Heart right ventricle (tissue), 16 donors: ENCODE measurements at regions of chr5 and their contacts with region 1.

Region 1: DNA sequence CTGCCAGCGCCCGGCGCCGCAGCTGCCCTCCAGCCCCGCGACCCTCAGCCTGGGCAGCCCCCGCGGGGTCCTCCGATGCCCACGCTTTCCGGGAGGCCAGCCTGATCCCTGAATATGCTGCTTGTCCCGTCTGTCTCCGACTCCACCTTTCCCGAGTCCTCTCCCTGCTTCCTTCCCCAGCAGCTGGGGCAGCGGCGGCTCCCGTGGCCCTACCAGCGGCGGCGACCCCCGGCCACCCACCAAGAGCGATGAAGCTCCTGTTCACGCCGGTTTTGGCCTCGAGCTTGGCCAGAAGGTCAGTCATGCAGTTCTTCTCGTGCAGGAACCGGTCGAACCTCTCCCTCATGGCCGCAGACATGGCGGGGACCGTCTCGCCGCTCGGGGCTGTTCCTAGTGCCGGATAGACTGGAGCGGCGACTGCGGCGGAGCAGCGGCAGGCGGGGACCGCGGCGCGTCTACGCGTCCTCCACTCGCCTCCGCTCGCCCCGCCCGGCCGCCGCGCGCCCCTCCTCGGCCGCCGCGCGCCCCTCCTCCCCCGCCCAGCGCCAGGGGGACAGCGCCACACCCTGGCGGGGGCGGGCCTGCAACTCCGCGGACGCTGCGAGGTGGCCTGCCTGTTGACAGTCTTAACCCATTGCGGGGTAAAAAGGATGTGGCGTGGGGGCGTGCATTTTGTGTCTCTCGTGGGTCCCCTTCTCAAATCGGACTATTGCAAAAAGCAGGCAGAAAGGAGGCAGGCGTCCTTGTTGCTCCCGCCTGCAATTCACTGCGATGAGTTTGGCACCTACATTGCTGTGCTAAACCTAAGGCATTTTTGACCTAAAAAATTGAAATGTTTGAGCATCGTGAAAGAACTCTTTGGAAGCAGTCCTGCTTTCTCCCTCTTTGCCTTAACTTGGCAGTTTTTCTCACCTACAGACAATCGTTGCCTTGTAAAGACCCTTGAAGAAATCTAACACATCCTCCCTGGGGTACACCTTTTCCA is at the start of gene REEP5:
- DNase-seq: peak; percentile 83 to 90
- ATAC-seq: peak; percentile 92 to 98 (median 96)
- H3K4me3 ChIP-seq: peak within 1 kb of the TSS; percentile 71 to 100 (median 94)
- H3K27ac ChIP-seq: peak within 1 kb of the TSS; percentile 87 to 99 (median 98)
- H3K4me1 ChIP-seq: peaks cover 5 to 61% (median 47%) of the 10 kb centered on the region in 9 donors
- H3K27me3 ChIP-seq: no peaks in the 10 kb centered on the region
- CTCF ChIP-seq: peak; percentile 65 to 92 (median 88)
- total RNA-seq, gene REEP5: 118 to 169 (median 134) TPM

Region 2: DNA sequence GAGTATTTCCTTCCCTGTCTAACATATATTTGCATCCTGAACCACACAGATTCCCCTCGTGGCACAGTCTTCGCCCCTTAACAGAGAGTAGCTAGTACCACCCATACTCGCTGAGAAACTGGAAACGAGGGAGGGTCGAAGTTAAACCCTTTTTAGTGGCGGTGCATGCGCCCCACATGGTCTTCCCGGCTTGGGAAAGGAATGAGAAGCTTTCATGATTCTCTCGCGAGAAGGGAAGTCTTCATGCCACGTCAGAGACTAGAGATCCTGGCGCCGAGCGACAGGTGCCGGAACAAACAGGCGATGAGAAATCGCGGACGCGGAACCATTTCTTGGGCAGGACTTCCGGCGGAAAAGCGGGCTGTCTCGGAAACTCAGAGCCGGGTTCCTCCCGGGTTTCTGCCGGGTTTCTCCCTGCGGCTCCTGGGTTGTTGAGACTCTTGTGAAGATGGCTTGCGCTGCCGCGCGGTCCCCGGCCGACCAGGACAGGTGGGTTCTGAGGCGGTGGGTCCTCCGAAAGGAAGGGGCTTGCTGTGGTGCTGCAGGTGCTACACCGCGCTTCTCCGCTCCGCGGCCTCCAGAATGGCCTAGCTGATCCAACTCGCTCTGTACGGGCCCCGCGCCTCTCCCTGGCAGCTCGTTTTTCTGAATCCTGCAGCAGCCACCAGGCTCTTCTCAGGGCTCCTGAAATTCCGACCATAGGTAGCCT is 61.0 kb before region 1 on chr5 and contains the start of gene SRP19:
- intact Hi-C with region 1: loop called in 6 of 10 experiments (anchors 2 to 5 kb)
- DNase-seq: peak; percentile 92 to 96
- ATAC-seq: peak; percentile 96 to 98 (median 98)
- H3K4me3 ChIP-seq: peak within 1 kb of the TSS; percentile 79 to 98 (median 92)
- H3K27ac ChIP-seq: peak within 1 kb of the TSS; percentile 24 to 92 (median 83)
- H3K4me1 ChIP-seq: peaks cover 12 to 35% (median 30%) of the 10 kb centered on the region in 9 donors
- H3K27me3 ChIP-seq: no peaks in the 10 kb centered on the region
- CTCF ChIP-seq: no peak
- total RNA-seq, gene SRP19: 19.4 to 33.9 (median 26.6) TPM

Region 3: DNA sequence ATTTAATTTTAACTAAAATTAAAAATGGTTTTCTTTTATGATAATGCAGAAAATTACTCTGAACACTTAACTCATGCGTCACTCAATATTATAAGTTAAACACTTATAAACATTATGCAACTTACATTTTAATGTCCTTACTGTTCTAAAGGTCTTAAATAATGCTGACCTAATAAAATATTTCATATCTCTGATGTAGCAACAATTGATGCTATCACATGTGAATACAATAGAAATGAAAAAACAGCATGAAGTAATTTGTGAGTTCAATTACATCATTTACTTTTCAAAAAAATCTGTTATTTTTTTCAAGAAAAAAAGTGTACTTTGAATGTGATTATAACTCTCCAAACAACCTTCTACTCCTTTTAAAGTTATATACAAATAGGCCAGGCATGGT is 26.3 kb after region 1 on chr5:
- intact Hi-C with region 1: loop called in 1 of 10 experiments (anchors 1 kb)
- DNase-seq: no peak
- ATAC-seq: no peak
- H3K4me3 ChIP-seq: no peak overlapping the region
- H3K27ac ChIP-seq: no peak overlapping the region
- H3K4me1 ChIP-seq: no peaks in the 10 kb centered on the region
- H3K27me3 ChIP-seq: no peaks in the 10 kb centered on the region
- CTCF ChIP-seq: no peak

Region 4: DNA sequence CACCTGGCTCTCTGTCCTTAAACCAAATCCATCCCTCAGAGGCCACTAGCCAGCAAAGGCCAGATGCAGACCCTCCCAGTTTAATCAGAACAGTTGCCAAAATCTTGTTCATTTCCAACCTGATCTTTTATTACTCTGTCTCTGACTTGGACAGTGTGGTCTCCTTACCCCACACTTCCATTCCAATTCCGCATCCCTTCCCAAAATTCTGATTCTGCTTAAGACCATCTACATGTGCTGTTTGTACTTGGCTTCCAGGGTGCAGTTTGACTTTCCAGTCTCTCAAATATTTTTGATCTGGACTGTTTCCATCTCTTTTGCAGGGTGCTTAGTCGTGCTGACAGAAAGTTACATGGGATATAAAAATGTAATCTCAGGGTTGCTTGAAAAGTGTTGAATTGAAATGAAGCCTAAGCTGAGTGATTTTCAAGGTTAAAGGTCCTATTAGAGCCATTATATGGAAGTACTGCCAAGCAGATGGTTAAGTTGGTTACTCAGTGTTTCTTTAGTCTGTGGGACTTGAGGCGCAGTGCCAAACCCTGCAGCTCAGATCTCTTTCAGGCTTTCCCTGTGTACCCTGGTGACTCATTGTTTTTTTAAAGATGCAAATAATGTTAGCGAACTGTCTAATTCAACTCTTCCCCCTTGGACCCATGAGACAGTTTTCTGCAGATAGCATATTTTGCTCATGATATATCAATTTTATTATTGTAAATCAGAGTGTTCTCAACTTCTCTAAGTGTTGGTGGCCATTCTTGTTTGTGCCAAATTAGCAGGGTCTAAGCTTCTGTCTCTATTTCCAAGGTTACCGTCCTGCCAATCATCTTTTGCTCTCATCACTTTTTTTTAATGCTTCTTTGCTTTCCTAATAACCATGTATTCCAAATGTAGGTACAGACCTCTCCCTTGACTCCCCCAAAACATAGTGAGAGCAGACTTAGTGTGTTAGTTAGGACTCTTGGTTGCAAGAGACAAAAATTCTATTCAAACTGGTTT is 36.3 kb after region 1 on chr5:
- intact Hi-C with region 1: loop called in 2 of 10 experiments (anchors 5 kb)
- DNase-seq: peak; percentile 57 to 70
- ATAC-seq: peak; percentile 23 to 95 (median 83)
- H3K4me3 ChIP-seq: peak overlapping the region in 1 of 10 donors; percentile 8
- H3K27ac ChIP-seq: peak overlapping the region in 7 of 10 donors; percentile 10 to 64 (median 49)
- H3K4me1 ChIP-seq: peaks cover 1 to 40% (median 29%) of the 10 kb centered on the region in 9 donors
- H3K27me3 ChIP-seq: no peaks in the 10 kb centered on the region
- CTCF ChIP-seq: no peak

Region 5: DNA sequence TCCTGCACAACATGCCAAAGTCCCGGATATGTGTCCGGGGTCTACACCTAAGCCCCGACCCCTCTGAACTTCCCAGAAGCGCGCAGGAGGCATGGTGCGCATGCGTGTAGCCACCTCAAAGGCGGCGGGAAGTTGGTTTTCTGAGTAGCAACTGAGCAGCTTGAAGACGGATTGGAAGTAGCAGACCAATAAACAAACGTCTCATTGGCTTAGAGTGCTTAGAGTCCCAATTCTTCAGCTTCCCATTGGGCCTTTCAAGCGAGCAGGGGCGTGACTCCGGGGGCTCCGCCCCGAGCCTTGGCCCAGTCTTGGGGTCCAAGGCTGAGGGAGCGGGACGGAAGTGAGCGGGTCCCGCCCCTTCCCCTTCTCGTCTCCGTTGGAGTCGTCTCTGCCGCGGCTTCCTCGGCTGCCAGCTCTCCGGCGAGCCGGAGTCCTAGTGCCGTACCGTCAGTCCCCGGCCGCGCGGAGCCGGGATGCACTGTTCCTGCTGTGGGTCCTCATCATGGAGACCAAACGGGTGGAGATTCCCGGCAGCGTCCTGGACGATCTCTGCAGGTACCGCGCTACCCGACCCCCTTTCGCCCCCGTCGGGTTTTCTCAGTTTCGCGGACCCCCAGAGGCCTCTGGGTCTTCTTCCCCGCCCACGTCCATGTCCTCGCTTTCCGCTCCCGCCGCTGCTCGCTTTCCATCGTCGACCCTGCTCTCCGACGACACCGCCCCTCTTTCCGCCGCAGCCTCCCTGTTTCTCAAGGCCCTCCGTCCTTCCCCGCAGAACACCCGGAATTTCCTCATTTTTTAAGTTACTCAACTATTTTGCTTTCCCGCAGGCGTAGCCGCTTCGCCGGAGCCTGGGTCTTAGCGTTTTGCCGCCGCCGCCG is 54.5 kb after region 1 on chr5 and contains the start of gene DCP2:
- intact Hi-C with region 1: loop called in 1 of 10 experiments (anchors 5 kb)
- DNase-seq: peak; percentile 94 to 96
- ATAC-seq: peak; percentile 99
- H3K4me3 ChIP-seq: peak within 1 kb of the TSS; percentile 73 to 94 (median 86)
- H3K27ac ChIP-seq: peak within 1 kb of the TSS; percentile 86 to 94 (median 92)
- H3K4me1 ChIP-seq: peaks cover 4 to 43% (median 35%) of the 10 kb centered on the region in 9 donors
- H3K27me3 ChIP-seq: no peaks in the 10 kb centered on the region
- CTCF ChIP-seq: no peak
- total RNA-seq, gene DCP2: 13.7 to 24.5 (median 16.3) TPM

Region 6: GRCh38 chr5:113081881-113082546 is 159.9 kb after region 1 on chr5:
- intact Hi-C with region 1: loop called in 1 of 10 experiments (anchors 5 kb)
- DNase-seq: no peak
- ATAC-seq: peak in 1 of 8 donors; percentile 55
- H3K4me3 ChIP-seq: no peak overlapping the region
- H3K27ac ChIP-seq: no peak overlapping the region
- H3K4me1 ChIP-seq: peaks cover 0 to 49% (median 28%) of the 10 kb centered on the region in 9 donors
- H3K27me3 ChIP-seq: no peaks in the 10 kb centered on the region
- CTCF ChIP-seq: no peak

Region 7: DNA sequence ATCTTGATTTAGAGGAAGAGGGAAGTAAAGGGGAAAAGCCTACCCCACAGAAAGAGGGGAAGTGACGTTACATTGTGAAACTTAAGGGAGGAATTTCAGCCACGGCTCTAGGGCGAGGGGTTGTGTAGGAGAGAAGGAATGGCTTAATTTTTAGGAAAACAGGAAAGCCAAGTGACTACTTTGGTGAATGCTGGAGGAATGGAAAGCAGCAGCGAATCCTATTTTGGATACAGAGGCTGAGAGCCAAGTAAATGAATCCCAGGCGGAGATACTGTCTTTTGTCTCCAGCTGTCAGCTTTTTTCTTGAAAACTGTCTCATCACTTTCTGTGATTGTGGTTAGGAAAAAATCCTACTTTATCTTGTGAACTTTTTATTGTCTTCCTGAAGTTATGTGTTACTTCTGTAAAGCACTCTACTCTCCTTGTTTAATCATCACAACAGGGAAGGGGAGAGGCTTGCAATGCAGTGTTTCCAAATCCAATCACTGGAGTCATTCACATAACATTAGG is 324.3 kb after region 1 on chr5:
- intact Hi-C with region 1: no loop called
- DNase-seq: peak in 1 of 2 donors; percentile 23
- ATAC-seq: peak in 7 of 8 donors; percentile 41 to 62 (median 53)
- H3K4me3 ChIP-seq: peak overlapping the region in 5 of 10 donors; percentile 2 to 24 (median 4)
- H3K27ac ChIP-seq: peak overlapping the region in 9 of 10 donors; percentile 50 to 87 (median 70)
- H3K4me1 ChIP-seq: peaks cover 14 to 92% (median 57%) of the 10 kb centered on the region in 9 donors
- H3K27me3 ChIP-seq: no peaks in the 10 kb centered on the region
- CTCF ChIP-seq: no peak